ENCODE measurements at regions of chr2 and their contacts with region 1.

Region 1: DNA sequence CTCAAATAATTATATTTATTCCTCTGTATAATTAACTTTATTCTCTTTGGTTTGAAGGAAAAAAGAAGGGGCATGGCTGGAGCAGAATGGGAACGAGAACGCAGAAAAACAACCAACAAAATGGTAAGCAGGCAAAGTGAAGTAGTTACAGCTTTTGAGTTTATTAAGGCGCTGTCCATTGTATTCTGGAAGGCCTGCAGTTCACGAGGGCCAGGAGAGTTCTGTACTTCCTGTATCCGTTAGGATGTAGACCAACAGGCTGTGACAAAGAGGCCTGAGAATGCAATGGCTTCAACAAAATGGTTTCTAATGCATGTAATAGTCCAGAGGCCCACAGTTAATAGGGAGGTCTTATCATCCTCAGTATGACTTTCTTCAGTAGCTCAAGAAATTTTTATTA is 32.5 kb upstream of the SP100 start:
- DNase-seq: peak; percentile 16
- H3K4me3 ChIP-seq: no peak overlapping the region
- H3K27ac ChIP-seq: no peak overlapping the region
- H3K4me1 ChIP-seq: no peaks in the 10 kb centered on the region
- H3K27me3 ChIP-seq: no peaks in the 10 kb centered on the region
- CTCF ChIP-seq: no peak
- POLR2A ChIP-seq: no peak

Region 2: DNA sequence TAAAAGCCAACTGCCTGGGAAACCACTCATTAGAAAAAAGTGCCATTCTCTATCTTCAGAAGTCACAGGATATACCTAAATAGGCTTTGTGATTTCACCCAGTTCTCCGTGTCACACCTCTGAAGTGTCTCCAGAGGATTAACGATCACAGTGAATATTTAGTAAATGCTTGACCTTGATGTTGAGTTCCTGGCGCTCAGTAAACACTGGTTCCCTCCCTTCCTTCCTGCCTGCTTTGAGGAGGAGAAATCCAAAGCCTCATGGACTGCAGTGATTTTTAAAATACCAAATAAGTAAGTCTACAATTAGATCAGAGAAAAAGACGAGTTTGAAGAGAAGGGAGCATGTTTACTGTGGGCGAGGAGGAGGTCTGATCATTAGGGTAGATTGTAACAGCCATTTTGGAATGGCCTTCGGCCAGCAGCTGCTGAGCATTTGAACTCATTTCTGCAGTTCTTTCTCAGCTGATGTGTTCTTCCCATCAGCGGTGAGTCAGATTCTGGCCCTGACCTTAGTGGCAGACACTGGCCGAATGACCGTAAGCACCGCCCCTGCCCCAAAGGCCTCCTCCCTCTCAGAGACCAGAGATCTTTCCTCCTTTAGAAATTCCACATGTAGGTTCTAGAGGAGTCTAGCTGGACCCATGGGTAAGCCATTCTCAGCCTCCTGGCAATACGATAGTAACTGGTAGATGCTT is 252.6 kb before region 1 on chr2:
- CTCF ChIA-PET with region 1: no interaction called
- POLR2A ChIA-PET with region 1: no interaction called
- dilution Hi-C with region 1: no loop called
- intact Hi-C with region 1: no loop called
- DNase-seq: peak; percentile 74
- H3K4me3 ChIP-seq: peak overlapping the region in 1 of 3 experiments; percentile 18
- H3K27ac ChIP-seq: peak overlapping the region; percentile 52
- H3K4me1 ChIP-seq: peaks cover 13% of the 10 kb centered on the region
- H3K27me3 ChIP-seq: no peaks in the 10 kb centered on the region
- CTCF ChIP-seq: no peak
- POLR2A ChIP-seq: no peak

Region 3: GRCh38 chr2:230403746-230404145 is 20.3 kb after region 1 on chr2:
- CTCF ChIA-PET with region 1: no interaction called
- POLR2A ChIA-PET with region 1: no interaction called
- dilution Hi-C with region 1: no loop called
- intact Hi-C with region 1: loop called (anchors 2 kb)
- DNase-seq: no peak
- H3K4me3 ChIP-seq: no peak overlapping the region
- H3K27ac ChIP-seq: no peak overlapping the region
- H3K4me1 ChIP-seq: peaks cover 36% of the 10 kb centered on the region
- H3K27me3 ChIP-seq: no peaks in the 10 kb centered on the region
- CTCF ChIP-seq: no peak
- POLR2A ChIP-seq: no peak

Region 4: GRCh38 chr2:230824406-230824978 is 441.0 kb after region 1 on chr2:
- CTCF ChIA-PET with region 1: no interaction called
- POLR2A ChIA-PET with region 1: no interaction called
- dilution Hi-C with region 1: no loop called
- intact Hi-C with region 1: no loop called
- DNase-seq: peak; percentile 71
- H3K4me3 ChIP-seq: no peak overlapping the region
- H3K27ac ChIP-seq: no peak overlapping the region
- H3K4me1 ChIP-seq: no peaks in the 10 kb centered on the region
- H3K27me3 ChIP-seq: peaks cover 6 to 20% of the 10 kb centered on the region in 2 experiments
- CTCF ChIP-seq: peak; percentile 59 to 60
- POLR2A ChIP-seq: no peak

Measured in endothelial cell of umbilical vein (primary cell).